SK-N-SH (cell line): ENCODE measurements at regions of chr2 and their contacts with region 1.

Region 1: GRCh38 chr2:1750933-1751766 is 6.8 kb upstream of the PXDN start:
- DNase-seq: peak; percentile 91
- H3K4me3 ChIP-seq: no peak overlapping the region; a peak in 1 of 4 replicates
- H3K27ac ChIP-seq: no peak overlapping the region
- H3K4me1 ChIP-seq: peaks cover 4 to 13% of the 10 kb centered on the region in 2 experiments; a peak in 2 of 4 replicates
- H3K27me3 ChIP-seq: no peaks in the 10 kb centered on the region
- CTCF ChIP-seq: peak; percentile 94
- EP300 ChIP-seq: no peak
- RAD21 ChIP-seq: peak; percentile 90

Region 2: DNA sequence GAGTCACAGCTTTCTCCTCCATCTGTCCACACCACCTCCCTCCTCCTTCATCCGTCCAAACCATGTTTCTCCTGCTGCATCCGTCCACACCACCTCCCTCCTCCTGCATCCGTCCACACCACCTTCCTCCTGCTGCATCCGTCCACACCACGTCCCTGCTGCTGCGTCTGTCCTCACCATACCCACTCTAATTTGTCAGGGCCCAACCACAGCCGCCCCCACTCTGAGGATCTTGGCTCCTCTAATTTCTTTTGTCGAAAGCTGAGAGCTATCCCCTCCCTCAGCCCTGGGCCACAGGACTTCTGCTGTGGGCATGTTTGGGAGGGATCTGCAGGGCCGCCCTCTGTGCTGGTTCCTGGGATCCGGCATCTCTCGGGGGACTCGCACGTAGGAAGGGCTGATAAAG is 270.5 kb before region 1 on chr2:
- CTCF ChIA-PET with region 1: no interaction called
- POLR2A ChIA-PET with region 1: no interaction called
- DNase-seq: no peak
- H3K4me3 ChIP-seq: no peak overlapping the region
- H3K27ac ChIP-seq: no peak overlapping the region
- H3K4me1 ChIP-seq: no peaks in the 10 kb centered on the region
- H3K27me3 ChIP-seq: no peaks in the 10 kb centered on the region
- CTCF ChIP-seq: no peak
- EP300 ChIP-seq: no peak
- RAD21 ChIP-seq: no peak

Region 3: DNA sequence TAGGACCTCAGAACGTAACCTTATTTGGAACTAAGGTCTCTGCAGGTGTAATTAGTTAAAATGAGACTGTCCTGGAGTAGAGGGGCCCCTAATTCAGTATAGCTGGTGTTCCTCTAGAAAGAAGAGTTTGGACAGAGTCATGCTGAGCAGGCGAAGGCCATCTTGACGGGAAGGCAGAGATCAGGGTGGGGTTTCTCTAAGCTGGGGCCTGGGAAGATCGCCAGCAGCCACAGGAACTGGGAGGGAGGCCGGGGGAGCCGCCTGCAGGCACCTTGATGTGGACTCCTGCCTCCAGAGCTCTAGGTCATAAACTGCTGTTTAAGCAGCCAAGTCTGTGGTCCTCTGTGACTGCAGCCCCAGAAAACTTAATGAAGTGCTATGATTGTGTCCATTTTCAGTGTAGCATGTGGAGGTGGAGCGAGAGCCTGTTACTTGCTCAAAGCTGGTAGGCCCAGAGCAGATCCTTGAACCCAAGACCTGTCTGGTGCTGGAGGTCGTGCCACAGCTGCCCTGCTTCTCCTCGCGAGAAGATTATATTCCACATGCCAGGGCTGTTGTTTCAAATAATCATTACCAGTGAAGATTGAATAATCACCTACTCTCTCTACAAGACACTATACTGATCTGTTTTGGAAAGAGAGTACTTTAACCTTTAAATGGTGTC is 232.2 kb before region 1 on chr2:
- CTCF ChIA-PET with region 1: no interaction called
- POLR2A ChIA-PET with region 1: no interaction called
- DNase-seq: no peak
- H3K4me3 ChIP-seq: no peak overlapping the region
- H3K27ac ChIP-seq: no peak overlapping the region
- H3K4me1 ChIP-seq: no peaks in the 10 kb centered on the region; a peak in 1 of 4 replicates
- H3K27me3 ChIP-seq: no peaks in the 10 kb centered on the region
- CTCF ChIP-seq: no peak
- EP300 ChIP-seq: no peak
- RAD21 ChIP-seq: no peak

Region 4: DNA sequence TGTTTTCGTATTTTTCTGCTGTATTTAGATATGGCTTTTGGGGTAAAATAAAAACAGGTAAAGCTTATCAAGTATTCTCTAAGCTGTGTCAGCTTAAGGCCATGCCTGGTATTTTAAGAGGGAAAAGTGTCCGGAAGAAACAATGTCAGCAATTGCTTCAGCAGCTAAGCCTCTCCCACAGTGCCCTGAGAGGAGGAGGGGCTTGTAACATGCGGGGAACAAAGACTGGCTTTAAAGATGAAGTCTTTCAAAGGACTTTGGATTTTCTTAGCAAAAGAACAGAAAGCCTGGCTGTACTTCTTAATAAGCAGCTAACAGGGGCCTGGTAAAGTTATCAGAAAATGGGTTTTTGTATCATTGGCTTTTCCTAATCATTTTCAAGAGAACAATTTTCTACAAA is 109.6 kb before region 1 on chr2:
- CTCF ChIA-PET with region 1: interaction called, 18 read pairs
- POLR2A ChIA-PET with region 1: no interaction called
- DNase-seq: no peak
- H3K4me3 ChIP-seq: no peak overlapping the region
- H3K27ac ChIP-seq: no peak overlapping the region
- H3K4me1 ChIP-seq: peaks cover 0 to 22% of the 10 kb centered on the region in 2 experiments; a peak in 1 of 4 replicates
- H3K27me3 ChIP-seq: no peaks in the 10 kb centered on the region
- CTCF ChIP-seq: no peak
- EP300 ChIP-seq: no peak
- RAD21 ChIP-seq: no peak

Region 5: GRCh38 chr2:1671916-1672315 is 79.2 kb before region 1 on chr2:
- CTCF ChIA-PET with region 1: interaction called, 20 read pairs
- POLR2A ChIA-PET with region 1: no interaction called
- DNase-seq: no peak
- H3K4me3 ChIP-seq: no peak overlapping the region
- H3K27ac ChIP-seq: no peak overlapping the region; a peak in 1 of 4 replicates
- H3K4me1 ChIP-seq: peaks cover 0 to 11% of the 10 kb centered on the region in 2 experiments; a peak in 3 of 4 replicates
- H3K27me3 ChIP-seq: no peaks in the 10 kb centered on the region
- CTCF ChIP-seq: no peak
- EP300 ChIP-seq: no peak
- RAD21 ChIP-seq: no peak

Region 6: GRCh38 chr2:1707771-1708418 is 43.3 kb before region 1 on chr2:
- CTCF ChIA-PET with region 1: interaction called, 11 read pairs
- POLR2A ChIA-PET with region 1: no interaction called
- DNase-seq: peak; percentile 78
- H3K4me3 ChIP-seq: no peak overlapping the region
- H3K27ac ChIP-seq: peak overlapping the region; percentile 26 to 86; a peak in 3 of 4 replicates
- H3K4me1 ChIP-seq: peaks cover 14 to 63% of the 10 kb centered on the region in 2 experiments; a peak in 3 of 4 replicates
- H3K27me3 ChIP-seq: no peaks in the 10 kb centered on the region
- CTCF ChIP-seq: no peak
- EP300 ChIP-seq: no peak
- RAD21 ChIP-seq: no peak

Region 7: GRCh38 chr2:1730015-1730927 is 20.9 kb before region 1 on chr2:
- CTCF ChIA-PET with region 1: interaction called, 47 read pairs
- POLR2A ChIA-PET with region 1: interaction called, 4 read pairs
- DNase-seq: peak; percentile 64
- H3K4me3 ChIP-seq: peak overlapping the region; percentile 19 to 45; a peak in 3 of 4 replicates
- H3K27ac ChIP-seq: peak overlapping the region; percentile 98 to 100
- H3K4me1 ChIP-seq: peaks cover 47 to 62% of the 10 kb centered on the region in 2 experiments
- H3K27me3 ChIP-seq: no peaks in the 10 kb centered on the region
- CTCF ChIP-seq: no peak
- EP300 ChIP-seq: peak in 1 of 2 experiments; percentile 47; a peak in 2 of 4 replicates
- RAD21 ChIP-seq: peak; percentile 17

Region 8: DNA sequence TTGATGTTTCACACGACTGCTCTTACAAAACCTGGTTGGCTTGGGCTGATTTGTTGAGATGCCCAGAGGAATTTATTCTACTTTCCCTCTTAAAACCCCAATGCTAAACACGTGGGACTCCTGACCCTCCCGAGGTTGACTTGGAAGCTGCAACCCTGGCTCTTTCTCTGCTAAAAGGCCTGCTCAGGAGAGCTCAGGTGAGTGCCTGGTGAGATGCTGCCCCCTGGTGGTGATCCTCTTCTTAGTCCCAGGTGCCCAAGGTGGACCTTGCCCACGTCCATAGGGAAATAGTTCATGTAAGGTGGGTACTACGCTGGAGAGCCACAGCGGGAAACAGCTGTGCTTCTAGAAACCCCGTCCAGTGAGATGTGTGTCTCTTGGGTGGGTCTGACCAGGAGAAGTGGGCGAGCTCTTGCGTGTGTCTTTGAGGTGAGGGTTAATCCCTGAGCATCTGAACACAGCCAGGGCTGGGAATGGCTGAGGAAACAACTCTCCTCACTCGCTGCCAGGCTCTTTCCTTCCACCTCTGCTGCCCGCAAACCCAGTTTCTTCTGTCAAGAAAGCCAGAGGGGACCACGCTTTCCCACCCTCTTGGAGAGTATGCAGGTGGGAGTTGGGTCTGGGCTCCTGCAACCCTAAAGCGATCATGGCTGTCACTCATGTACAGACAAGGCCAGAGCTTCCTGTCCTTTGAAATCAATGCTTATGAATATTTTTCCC is 18.7 kb after region 1 on chr2:
- CTCF ChIA-PET with region 1: interaction called, 114 read pairs
- POLR2A ChIA-PET with region 1: no interaction called
- DNase-seq: peak; percentile 93
- H3K4me3 ChIP-seq: no peak overlapping the region; a peak in 1 of 4 replicates
- H3K27ac ChIP-seq: no peak overlapping the region
- H3K4me1 ChIP-seq: no peaks in the 10 kb centered on the region; a peak in 1 of 4 replicates
- H3K27me3 ChIP-seq: no peaks in the 10 kb centered on the region
- CTCF ChIP-seq: peak; percentile 94
- EP300 ChIP-seq: no peak
- RAD21 ChIP-seq: peak; percentile 93

Region 9: GRCh38 chr2:1817256-1818051 is 66.3 kb after region 1 on chr2:
- CTCF ChIA-PET with region 1: interaction called, 14 read pairs
- POLR2A ChIA-PET with region 1: no interaction called
- DNase-seq: peak; percentile 99
- H3K4me3 ChIP-seq: peak overlapping the region in 1 of 2 experiments; percentile 23; a peak in 1 of 4 replicates
- H3K27ac ChIP-seq: peak overlapping the region; percentile 36 to 86; a peak in 3 of 4 replicates
- H3K4me1 ChIP-seq: peaks cover 0 to 14% of the 10 kb centered on the region in 2 experiments; a peak in 1 of 4 replicates
- H3K27me3 ChIP-seq: no peaks in the 10 kb centered on the region
- CTCF ChIP-seq: peak; percentile 100
- EP300 ChIP-seq: peak in 1 of 2 experiments; percentile 73; a peak in 2 of 4 replicates
- RAD21 ChIP-seq: peak; percentile 76

Region 10: GRCh38 chr2:1967242-1968208 is 216.4 kb after region 1 on chr2:
- CTCF ChIA-PET with region 1: no interaction called
- POLR2A ChIA-PET with region 1: no interaction called
- DNase-seq: peak; percentile 60
- H3K4me3 ChIP-seq: no peak overlapping the region
- H3K27ac ChIP-seq: peak overlapping the region in 1 of 2 experiments; percentile 19; a peak in 1 of 4 replicates
- H3K4me1 ChIP-seq: peaks cover 0 to 65% of the 10 kb centered on the region in 2 experiments; a peak in 2 of 4 replicates
- H3K27me3 ChIP-seq: no peaks in the 10 kb centered on the region
- CTCF ChIP-seq: no peak
- EP300 ChIP-seq: no peak
- RAD21 ChIP-seq: no peak